AG04449 (cell line): ENCODE measurements at regions of chr5 and their contacts with region 1.

Region 1: DNA sequence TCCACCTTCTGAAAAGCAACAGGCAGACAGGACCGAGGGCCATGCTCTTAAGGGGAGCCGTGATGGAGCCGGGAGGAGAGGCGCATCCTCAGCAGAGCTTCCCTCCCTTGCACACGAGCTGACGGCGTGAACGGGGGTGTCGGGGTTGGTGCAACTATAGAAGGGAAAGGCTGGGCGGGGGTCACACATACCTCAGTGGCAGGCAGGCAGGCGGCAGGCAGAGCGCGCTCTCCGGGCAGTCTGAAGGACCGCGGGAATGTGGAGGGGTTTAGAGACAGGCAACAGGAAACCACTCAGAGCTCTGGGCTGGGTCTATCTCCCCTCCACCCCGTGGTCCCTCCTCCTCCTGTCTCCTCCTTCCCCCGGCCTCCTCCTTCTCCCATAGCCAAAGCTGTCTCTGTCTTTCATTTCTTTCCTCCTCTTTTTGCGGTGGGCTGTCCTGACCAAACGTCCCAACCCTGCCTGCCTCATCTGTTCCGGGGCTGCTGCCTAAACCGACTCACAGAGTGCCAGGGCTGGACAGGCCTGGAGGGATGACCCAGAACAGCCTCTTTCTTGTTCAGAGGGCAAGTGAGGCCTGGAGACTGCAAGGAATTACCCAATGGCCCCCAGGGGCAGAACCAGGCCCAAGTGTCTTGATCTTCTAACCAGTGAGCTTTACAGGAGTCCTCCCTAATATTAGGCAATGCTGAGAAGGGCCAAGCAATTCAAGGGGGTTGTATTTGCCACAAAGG is at the start of gene SPARC:
- DNase-seq: peak; percentile 87
- H3K4me3 ChIP-seq: peak within 1 kb of the TSS; percentile 100
- CTCF ChIP-seq: peak; percentile 4

Region 2: DNA sequence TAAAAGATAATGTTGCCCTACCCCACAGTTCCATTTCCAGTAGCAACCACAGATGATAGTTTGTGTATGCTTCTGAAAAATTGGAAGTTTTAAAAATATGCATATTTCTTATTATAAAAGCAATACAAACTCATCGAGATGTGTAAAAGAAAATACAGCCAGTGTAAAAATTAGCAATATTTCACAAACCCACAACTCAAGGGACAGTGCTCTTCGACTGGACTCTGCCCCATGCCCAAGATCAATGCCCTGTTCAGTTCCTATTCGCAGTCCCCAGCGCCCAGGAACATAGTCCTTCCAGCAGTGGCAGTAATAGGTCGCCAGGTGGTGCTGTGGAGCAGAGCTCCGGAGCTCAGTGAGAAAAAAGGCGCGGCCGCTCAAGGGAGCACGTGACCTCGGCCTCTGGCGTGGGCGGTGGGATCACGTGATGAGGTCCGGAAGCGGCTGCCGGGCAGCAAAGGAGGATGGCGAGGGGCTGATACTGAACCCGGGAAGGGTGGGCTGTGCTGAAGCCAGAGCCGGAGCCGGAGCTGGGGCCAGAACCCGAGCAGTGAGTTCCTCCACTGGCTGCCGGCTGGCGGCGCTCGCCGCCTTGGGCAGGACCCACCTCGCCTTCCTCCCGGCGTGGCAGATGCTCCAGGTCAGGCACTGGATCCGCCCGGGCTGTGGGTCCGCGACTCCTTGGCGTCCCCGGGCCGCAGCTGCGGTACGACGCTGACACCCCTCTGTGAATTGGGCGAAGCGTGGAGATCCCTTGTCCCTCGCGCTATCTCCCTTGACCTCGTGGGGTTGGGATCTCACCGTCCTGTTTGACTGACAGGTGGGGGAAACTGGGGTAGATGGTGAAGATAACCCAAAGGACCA is 239.4 kb before region 1 on chr5 and contains the start of gene SLC36A1:
- CTCF ChIA-PET with region 1: no interaction called
- POLR2A ChIA-PET with region 1: no interaction called
- DNase-seq: no peak
- H3K4me3 ChIP-seq: peak within 1 kb of the TSS; percentile 96
- CTCF ChIP-seq: peak; percentile 93

Region 3: GRCh38 chr5:151585970-151586369 is 100.9 kb before region 1 on chr5:
- CTCF ChIA-PET with region 1: no interaction called
- POLR2A ChIA-PET with region 1: no interaction called
- DNase-seq: no peak
- H3K4me3 ChIP-seq: no peak overlapping the region
- CTCF ChIP-seq: no peak

Region 4: GRCh38 chr5:151602806-151603205 is 84.0 kb before region 1 on chr5:
- CTCF ChIA-PET with region 1: no interaction called
- POLR2A ChIA-PET with region 1: no interaction called
- DNase-seq: peak; percentile 33
- H3K4me3 ChIP-seq: no peak overlapping the region
- CTCF ChIP-seq: no peak

Region 5: DNA sequence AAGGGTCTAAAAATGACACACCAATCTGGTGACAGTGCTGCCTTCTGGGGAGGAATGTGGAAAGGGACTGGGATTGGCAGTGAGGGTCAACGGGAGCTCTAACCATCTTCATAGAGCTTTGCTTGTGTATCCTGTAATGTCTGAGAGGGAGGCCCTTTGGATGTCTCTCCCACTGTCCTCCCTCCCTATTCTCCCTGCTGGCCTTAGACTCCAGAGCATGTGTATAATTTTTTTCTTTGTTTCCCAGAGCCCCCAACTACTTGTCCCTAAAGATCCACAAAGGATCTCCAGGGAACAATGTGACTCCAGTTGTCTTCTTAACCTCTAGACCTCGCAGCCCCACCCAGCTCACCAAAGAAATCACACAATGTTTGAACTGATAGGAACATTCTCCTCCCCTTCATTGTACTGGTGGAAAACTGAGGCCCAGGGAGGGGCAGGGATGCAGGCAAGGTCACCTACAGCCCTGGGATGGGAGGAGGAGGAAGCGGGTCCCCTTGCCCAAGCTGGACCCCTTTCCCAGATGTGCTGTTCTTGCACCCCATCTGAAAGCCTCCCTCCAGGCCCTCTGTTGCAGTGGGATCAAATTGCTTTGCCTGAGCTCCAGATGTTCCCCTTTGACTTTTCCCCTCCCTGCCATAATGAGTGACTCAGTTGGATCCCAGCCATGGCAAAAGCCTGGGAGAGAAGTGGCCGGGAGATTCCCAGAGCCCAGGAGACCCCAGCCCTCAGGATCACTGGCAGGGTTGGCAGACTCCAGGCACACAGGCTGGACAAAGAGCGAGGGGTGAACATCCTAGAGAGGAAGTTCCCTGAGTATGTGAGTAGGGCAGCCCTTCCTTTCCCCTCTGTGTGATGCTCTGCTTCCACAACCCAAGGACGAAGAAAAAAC is 21.9 kb before region 1 on chr5:
- CTCF ChIA-PET with region 1: interaction called, 6 read pairs
- POLR2A ChIA-PET with region 1: interaction called, 53 read pairs
- DNase-seq: no peak
- H3K4me3 ChIP-seq: no peak overlapping the region
- CTCF ChIP-seq: no peak

Region 6: DNA sequence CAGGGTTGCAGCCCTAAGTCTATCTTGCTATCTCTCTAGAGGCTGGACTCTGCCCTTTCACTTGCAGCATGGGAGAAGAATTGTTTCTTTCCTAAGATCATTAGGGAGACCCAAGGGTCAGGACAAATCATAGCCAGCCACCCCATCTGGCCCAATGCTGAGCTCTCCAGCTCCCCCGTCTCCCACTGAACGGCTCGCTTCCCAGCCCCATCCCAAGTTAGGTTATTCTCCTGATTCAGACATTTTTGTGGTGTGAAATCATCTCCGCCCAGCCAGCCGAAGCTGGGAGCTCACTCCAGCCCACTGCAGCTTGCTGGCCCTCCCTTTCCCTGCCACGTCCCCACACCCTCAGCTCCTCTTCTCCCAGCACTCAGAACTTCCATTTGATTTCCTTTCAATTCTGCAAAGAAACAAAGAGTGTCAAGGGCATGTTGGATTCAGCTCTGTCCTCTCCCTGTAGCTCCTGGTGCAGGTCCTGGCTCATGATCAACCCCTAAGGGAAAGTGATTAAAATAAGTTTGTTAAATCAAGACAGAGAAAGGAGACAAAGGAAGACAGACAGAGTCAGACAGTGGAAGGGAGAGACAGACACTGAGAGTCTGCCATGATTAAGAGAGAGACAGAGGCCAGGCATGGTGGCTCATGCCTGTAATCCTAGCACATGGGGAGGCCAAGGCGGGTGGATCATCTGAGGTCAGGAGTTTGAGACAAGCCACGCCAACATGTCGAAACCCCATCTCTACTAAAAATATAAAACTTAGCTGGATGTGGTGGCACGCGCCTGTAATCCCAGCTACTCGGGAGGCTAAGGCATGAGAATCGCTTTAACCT is 12.4 kb after region 1 on chr5:
- CTCF ChIA-PET with region 1: interaction called, 19 read pairs
- POLR2A ChIA-PET with region 1: interaction called, 235 read pairs
- DNase-seq: peak; percentile 95
- H3K4me3 ChIP-seq: no peak overlapping the region
- CTCF ChIP-seq: no peak

Region 7: GRCh38 chr5:151719228-151720000 is 32.6 kb after region 1 on chr5:
- CTCF ChIA-PET with region 1: interaction called, 38 read pairs
- POLR2A ChIA-PET with region 1: interaction called, 94 read pairs
- DNase-seq: no peak
- H3K4me3 ChIP-seq: no peak overlapping the region
- CTCF ChIP-seq: peak; percentile 45